ENCODE measurements at regions of chr7 and their contacts with region 1.

Region 1: DNA sequence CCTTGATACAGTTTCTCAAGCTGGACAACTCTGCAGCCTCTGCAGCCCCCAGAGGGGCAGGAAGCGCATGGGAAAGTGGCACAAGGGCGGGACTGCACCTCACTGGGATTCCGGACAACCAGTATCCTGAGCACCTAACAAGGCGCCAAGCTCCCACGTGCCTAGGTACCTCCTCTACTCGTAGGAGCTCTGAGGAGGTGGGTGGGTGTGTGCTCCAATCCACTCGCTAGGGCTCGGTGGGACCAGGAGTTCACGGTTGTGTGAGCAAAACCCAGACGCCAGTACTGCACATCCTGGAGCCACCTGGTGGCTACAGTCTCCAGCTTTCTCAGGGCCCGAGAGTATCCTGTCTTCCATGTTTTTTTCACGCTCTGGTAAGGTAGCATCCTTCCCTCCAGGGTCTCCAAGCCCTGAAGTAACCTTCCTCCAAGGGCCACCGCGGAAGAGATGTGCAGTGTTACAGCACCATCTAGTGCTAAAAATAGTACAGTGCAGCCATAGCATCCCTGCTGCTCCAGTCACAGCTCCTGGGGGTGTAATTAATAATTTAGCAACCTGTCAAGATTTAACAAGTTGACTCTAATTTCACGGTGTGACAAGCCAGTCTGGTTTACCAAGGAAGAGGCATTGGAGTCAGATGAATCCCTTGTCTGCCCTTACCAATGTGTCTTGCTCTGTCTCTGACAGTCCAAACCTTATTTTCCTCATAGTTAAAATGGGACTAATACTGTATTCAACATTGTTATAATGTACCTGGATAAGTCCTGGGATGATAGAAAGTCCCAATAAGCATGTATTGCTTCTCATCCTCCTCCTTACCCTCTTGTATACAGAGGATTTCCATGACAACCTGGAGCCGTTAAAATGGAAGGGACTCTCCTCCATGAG is 70.4 kb downstream of the HERPUD2 start:
- DNase-seq: peak; percentile 76
- H3K4me3 ChIP-seq: no peak overlapping the region; a peak in 1 of 4 replicates
- H3K27ac ChIP-seq: no peak overlapping the region
- H3K4me1 ChIP-seq: peaks cover 0 to 4% of the 10 kb centered on the region in 2 experiments; a peak in 1 of 4 replicates
- H3K27me3 ChIP-seq: no peaks in the 10 kb centered on the region
- CTCF ChIP-seq: peak; percentile 99
- EP300 ChIP-seq: no peak
- RAD21 ChIP-seq: peak; percentile 94

Region 2: GRCh38 chr7:35513828-35514227 is 110.7 kb before region 1 on chr7:
- CTCF ChIA-PET with region 1: interaction called, 24 read pairs
- POLR2A ChIA-PET with region 1: no interaction called
- DNase-seq: no peak
- H3K4me3 ChIP-seq: no peak overlapping the region
- H3K27ac ChIP-seq: no peak overlapping the region
- H3K4me1 ChIP-seq: peaks cover 5 to 12% of the 10 kb centered on the region in 2 experiments; a peak in 3 of 4 replicates
- H3K27me3 ChIP-seq: no peaks in the 10 kb centered on the region; the same call in 1 of the 2 replicates
- CTCF ChIP-seq: no peak
- EP300 ChIP-seq: no peak
- RAD21 ChIP-seq: no peak

Region 3: DNA sequence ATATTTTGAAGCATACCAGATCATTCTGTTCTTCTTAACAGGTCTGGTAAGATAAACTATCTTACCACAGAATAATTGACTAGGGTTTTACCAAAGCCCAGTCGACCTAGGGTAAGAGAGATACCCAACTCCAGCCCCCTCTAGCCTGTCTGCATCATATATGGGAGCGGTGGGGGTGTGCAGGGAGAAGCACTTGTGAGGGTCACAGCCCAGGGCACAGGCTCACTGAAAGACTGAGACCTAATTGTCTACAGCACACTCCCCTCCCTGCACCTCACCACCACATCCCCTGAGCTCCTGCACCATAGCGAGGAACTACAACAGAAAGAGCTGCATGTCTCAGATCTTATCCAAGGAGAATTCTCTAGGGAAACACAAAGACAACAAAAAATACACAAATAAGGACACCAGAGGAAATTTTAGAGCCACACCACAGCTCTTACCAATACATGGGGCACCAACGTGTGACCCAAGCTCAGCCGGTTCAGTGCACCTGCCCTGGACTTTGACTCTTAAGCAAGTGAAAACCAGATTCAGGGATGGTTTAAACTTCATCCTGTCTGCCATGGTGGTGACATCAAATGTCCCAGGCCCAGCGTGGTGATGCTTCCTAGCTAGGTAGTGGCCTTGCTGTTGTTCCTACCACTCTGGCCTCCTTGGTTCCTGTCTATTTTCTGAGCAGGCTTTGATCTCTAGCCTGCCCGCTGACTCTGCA is 80.4 kb before region 1 on chr7:
- CTCF ChIA-PET with region 1: interaction called, 36 read pairs
- POLR2A ChIA-PET with region 1: no interaction called
- DNase-seq: no peak
- H3K4me3 ChIP-seq: no peak overlapping the region
- H3K27ac ChIP-seq: no peak overlapping the region
- H3K4me1 ChIP-seq: peaks cover 0 to 3% of the 10 kb centered on the region in 2 experiments; a peak in 1 of 4 replicates
- H3K27me3 ChIP-seq: peaks cover 56% of the 10 kb centered on the region; the same call in 1 of the 2 replicates
- CTCF ChIP-seq: no peak
- EP300 ChIP-seq: no peak
- RAD21 ChIP-seq: no peak

Region 4: GRCh38 chr7:35593896-35594295 is 30.6 kb before region 1 on chr7:
- CTCF ChIA-PET with region 1: interaction called, 54 read pairs
- POLR2A ChIA-PET with region 1: no interaction called
- DNase-seq: peak; percentile 36
- H3K4me3 ChIP-seq: no peak overlapping the region
- H3K27ac ChIP-seq: no peak overlapping the region
- H3K4me1 ChIP-seq: peaks cover 0 to 9% of the 10 kb centered on the region in 2 experiments; a peak in 1 of 4 replicates
- H3K27me3 ChIP-seq: no peaks in the 10 kb centered on the region
- CTCF ChIP-seq: peak; percentile 61
- EP300 ChIP-seq: no peak
- RAD21 ChIP-seq: no peak

Region 5: DNA sequence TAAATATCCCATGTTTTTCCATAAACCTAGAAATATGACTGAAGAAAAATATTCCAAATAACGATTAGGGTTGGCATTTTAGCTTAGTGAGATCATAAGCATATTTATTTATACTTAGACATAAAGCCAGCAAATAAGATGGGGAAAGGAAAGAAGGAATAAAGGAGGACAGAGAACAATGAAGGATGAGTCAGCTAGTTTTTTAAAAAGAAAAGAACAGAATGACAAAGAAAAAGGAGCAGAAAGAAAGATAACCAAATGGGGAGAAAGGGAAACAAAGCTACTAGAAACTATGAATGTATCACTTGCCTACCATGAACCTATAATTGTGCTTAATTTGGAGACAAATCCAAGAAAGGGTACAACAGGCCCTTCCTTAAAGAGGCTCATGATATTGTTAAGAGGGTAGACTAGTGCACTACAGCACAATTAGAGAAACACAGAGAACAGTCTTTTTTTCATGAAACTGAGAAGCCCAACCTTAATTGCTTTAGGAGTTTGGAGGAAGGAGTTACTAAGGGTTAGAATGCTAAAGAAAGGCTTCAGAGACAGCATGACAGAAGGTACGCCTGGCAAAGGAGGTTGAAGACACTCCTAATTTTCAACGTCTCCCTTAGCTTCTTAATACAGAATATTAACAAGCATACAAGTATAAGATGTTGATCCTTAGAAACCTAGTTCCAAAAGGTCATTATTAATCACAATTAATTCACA is 46.5 kb after region 1 on chr7:
- CTCF ChIA-PET with region 1: interaction called, 15 read pairs
- POLR2A ChIA-PET with region 1: no interaction called
- DNase-seq: no peak
- H3K4me3 ChIP-seq: no peak overlapping the region
- H3K27ac ChIP-seq: no peak overlapping the region
- H3K4me1 ChIP-seq: peaks cover 0 to 16% of the 10 kb centered on the region in 2 experiments; a peak in 2 of 4 replicates
- H3K27me3 ChIP-seq: no peaks in the 10 kb centered on the region
- CTCF ChIP-seq: no peak
- EP300 ChIP-seq: no peak
- RAD21 ChIP-seq: no peak

Measured in SK-N-SH (cell line).